ENCODE measurements at regions of chr2 and their contacts with region 1.

Region 1: GRCh38 chr2:24409700-24410556 is 49.6 kb upstream of the ITSN2 start:
- DNase-seq: peak; percentile 34 to 88
- H3K4me3 ChIP-seq: no peak overlapping the region
- H3K27ac ChIP-seq: no peak overlapping the region
- H3K4me1 ChIP-seq: no peaks in the 10 kb centered on the region
- H3K27me3 ChIP-seq: peaks cover 0 to 20% (median 5%) of the 10 kb centered on the region in 3 donors
- CTCF ChIP-seq: peak in 5 of 7 experiments; percentile 29 to 85 (median 73)
- EP300 ChIP-seq: no peak
- POLR2A ChIP-seq: no peak

Region 2: GRCh38 chr2:24505534-24506275 is 95.8 kb after region 1 on chr2:
- intact Hi-C with region 1: no loop called
- DNase-seq: no peak
- H3K4me3 ChIP-seq: no peak overlapping the region
- H3K27ac ChIP-seq: no peak overlapping the region
- H3K4me1 ChIP-seq: peaks cover 8 to 46% (median 20%) of the 10 kb centered on the region in 4 donors
- H3K27me3 ChIP-seq: no peaks in the 10 kb centered on the region
- CTCF ChIP-seq: no peak
- EP300 ChIP-seq: no peak
- POLR2A ChIP-seq: no peak

Region 3: GRCh38 chr2:24785671-24786321 is 375.9 kb after region 1 on chr2:
- intact Hi-C with region 1: no loop called
- DNase-seq: peak in 1 of 2 donors; percentile 30
- H3K4me3 ChIP-seq: no peak overlapping the region
- H3K27ac ChIP-seq: no peak overlapping the region
- H3K4me1 ChIP-seq: no peaks in the 10 kb centered on the region
- H3K27me3 ChIP-seq: no peaks in the 10 kb centered on the region
- CTCF ChIP-seq: no peak
- EP300 ChIP-seq: no peak
- POLR2A ChIP-seq: no peak

Region 4: GRCh38 chr2:24827321-24828237 is 417.7 kb after region 1 on chr2:
- intact Hi-C with region 1: loop called (anchors 5 kb)
- DNase-seq: peak; percentile 85 to 94
- H3K4me3 ChIP-seq: no peak overlapping the region
- H3K27ac ChIP-seq: no peak overlapping the region
- H3K4me1 ChIP-seq: peaks cover 8 to 12% (median 10%) of the 10 kb centered on the region in 4 donors
- H3K27me3 ChIP-seq: no peaks in the 10 kb centered on the region
- CTCF ChIP-seq: peak in 5 of 7 experiments; percentile 77 to 92 (median 84)
- EP300 ChIP-seq: no peak
- POLR2A ChIP-seq: no peak

Measured in stomach (tissue), 19 donors.